Calu3 (cell line): ENCODE measurements at regions of chr12 and their contacts with region 1.

Region 1: DNA sequence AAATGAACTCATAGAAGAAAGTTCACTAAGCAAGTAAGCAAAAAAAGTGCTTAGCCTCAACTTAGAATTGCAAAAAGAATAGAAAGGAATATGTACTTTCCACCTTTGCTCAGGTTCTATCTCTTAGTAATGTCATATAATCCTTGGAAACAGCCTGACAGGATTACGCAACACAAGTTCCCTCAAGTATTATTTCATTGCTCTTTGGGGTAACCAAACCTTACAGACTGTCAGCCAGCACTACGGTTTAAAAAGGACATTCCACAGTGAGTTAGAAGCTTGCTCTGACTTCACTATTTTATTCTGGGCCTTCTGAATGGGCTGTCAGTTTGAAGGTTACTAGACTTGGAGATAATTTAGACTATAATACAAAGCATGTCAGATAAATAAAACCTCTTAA is 264.0 kb downstream of the ATXN7L3B start:
- DNase-seq: no peak
- H3K4me3 Mint-ChIP-seq: no peak overlapping the region
- H3K27ac Mint-ChIP-seq: no peak overlapping the region
- H3K4me1 Mint-ChIP-seq: peaks cover 14% of the 10 kb centered on the region
- H3K27me3 Mint-ChIP-seq: no peaks in the 10 kb centered on the region
- CTCF ChIP-seq: no peak

Region 2: DNA sequence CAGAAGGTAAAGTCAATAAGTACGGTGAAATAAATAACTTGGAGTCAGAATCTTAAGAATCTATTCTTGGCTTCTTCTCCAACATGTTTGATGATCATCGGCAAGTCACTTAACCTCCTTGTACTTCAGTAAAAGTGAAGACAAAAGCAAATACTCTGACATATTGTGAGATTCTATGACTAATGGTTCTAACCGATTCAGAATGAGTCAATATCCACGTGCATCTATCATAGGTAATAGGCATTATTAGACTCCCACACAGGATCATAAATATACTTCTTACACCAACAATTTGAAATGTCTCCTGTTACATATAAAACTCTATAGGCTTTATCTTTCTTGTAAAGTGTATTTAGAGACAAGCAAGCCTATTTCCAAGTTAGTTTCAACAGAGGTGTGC is 408.4 kb before region 1 on chr12:
- CTCF ChIA-PET with region 1: no interaction called
- intact Hi-C with region 1: no loop called
- DNase-seq: no peak
- H3K4me3 Mint-ChIP-seq: no peak overlapping the region
- H3K27ac Mint-ChIP-seq: no peak overlapping the region
- H3K4me1 Mint-ChIP-seq: peaks cover 37% of the 10 kb centered on the region
- H3K27me3 Mint-ChIP-seq: no peaks in the 10 kb centered on the region
- CTCF ChIP-seq: no peak

Region 3: DNA sequence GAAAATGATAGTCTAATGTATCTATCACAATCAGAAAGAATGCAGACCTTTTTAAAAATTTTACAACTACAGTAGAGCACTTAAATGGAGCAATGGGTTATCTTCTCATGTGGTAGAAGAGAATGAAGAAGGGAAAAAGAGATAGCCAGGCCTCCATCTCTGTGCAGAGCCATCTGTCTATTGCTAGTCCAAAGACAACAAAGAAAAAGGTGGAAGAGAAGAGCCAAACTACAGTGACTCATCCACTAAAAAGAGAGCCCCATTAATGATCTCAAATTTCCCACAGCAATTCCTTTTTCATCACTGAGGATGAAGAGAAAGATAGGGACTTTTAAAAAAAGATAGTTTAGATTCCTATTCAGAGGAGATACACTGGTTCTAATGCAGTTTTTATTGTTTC is 31.1 kb before region 1 on chr12:
- CTCF ChIA-PET with region 1: no interaction called
- intact Hi-C with region 1: no loop called
- DNase-seq: no peak
- H3K4me3 Mint-ChIP-seq: no peak overlapping the region
- H3K27ac Mint-ChIP-seq: no peak overlapping the region
- H3K4me1 Mint-ChIP-seq: no peaks in the 10 kb centered on the region
- H3K27me3 Mint-ChIP-seq: no peaks in the 10 kb centered on the region
- CTCF ChIP-seq: no peak

Region 4: DNA sequence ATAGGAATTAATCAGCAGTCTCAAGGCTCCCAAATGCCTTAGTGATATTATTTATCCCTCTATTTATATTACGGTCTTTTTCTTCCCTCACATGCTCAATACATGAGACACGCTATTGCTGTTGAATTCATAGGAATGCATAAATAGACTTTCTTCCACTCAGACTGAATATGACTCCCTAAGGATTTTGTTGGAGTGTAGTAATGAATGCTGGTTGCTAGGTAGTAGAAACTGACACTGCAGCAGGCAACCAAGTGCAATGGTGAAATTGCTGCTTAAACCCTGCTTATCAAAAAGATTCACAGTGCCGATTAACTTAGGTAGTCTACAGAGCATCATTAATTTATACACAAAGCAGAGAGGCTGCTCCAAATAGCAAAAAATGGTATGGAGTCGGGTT is 239.8 kb after region 1 on chr12:
- CTCF ChIA-PET with region 1: no interaction called
- intact Hi-C with region 1: no loop called
- DNase-seq: no peak
- H3K4me3 Mint-ChIP-seq: no peak overlapping the region
- H3K27ac Mint-ChIP-seq: no peak overlapping the region
- H3K4me1 Mint-ChIP-seq: no peaks in the 10 kb centered on the region
- H3K27me3 Mint-ChIP-seq: no peaks in the 10 kb centered on the region
- CTCF ChIP-seq: no peak

Region 5: DNA sequence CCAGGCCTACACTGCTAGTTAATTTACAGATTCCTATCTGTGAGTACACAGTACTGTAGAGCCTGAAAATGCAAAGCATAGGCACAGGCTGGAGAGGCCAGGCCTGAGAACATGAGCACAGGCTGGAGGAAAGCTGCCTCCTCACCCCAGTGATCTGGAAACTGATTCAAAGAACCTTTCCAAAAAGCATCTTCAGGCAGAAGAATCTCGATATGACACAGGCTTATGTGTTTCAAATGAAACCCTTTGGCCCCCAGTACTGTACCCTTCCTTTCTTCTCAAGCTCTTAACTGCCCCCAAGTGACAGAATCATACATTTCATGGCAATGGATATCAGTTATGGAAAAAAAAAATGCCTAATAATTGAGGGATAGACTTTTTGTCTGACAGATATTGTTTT is 286.0 kb after region 1 on chr12:
- CTCF ChIA-PET with region 1: no interaction called
- intact Hi-C with region 1: loop called (anchors 10 kb)
- DNase-seq: peak; percentile 20
- H3K4me3 Mint-ChIP-seq: no peak overlapping the region
- H3K27ac Mint-ChIP-seq: no peak overlapping the region
- H3K4me1 Mint-ChIP-seq: no peaks in the 10 kb centered on the region
- H3K27me3 Mint-ChIP-seq: no peaks in the 10 kb centered on the region
- CTCF ChIP-seq: peak; percentile 30

Region 6: GRCh38 chr12:75289753-75290152 is 488.1 kb after region 1 on chr12:
- CTCF ChIA-PET with region 1: no interaction called
- intact Hi-C with region 1: loop called (anchors 1 kb)
- DNase-seq: no peak
- H3K4me3 Mint-ChIP-seq: no peak overlapping the region
- H3K27ac Mint-ChIP-seq: no peak overlapping the region
- H3K4me1 Mint-ChIP-seq: no peaks in the 10 kb centered on the region
- H3K27me3 Mint-ChIP-seq: no peaks in the 10 kb centered on the region
- CTCF ChIP-seq: no peak

Region 7: GRCh38 chr12:75564398-75564797 is 762.8 kb after region 1 on chr12:
- CTCF ChIA-PET with region 1: no interaction called
- intact Hi-C with region 1: no loop called
- DNase-seq: peak; percentile 42
- H3K4me3 Mint-ChIP-seq: no peak overlapping the region
- H3K27ac Mint-ChIP-seq: no peak overlapping the region
- H3K4me1 Mint-ChIP-seq: peaks cover 20% of the 10 kb centered on the region
- H3K27me3 Mint-ChIP-seq: no peaks in the 10 kb centered on the region
- CTCF ChIP-seq: no peak